ENCODE measurements at regions of chr5 and their contacts with region 1.

Region 1: DNA sequence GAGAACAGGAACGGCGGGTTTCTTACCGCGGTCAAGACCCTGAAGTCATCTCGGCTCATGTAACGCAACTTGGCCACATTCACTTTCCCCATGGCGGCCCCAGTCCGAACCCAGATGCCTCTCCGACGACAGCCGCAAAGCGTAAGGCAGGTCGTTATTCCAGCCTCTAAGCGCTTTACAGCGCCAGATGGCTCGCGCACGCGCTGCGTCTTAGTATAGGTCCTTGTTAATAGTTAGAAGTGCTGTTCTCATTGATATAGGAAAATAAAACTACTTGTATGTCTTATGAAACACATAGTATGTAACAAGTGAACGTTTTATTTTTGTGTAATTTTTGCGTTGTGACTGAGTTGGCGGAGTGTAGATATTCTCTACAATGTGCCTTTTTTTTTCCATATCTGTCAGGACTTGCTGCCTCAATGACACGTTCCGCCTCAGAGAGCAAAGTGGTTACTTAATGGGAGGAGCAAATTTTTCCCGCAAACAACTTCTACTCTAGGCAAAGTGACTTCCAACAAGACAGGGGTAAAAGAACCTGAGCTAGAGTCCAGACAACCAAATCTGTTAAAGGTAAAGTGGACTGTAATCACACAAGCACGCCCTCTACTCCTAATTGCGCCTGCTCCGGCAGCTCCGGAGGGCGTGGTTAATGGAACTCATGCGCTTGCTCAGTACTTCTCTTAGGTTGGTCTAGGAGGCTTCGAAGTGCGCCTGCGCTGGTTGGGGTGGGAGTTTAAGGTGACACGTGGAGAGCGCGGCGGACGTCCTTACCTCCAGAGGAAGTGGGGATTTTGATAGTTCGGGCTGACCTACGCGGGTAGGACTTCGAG is at the start of gene RIOK2:
- DNase-seq: peak; percentile 74 to 96
- H3K4me3 ChIP-seq: peak within 1 kb of the TSS; percentile 69 to 79
- H3K27ac ChIP-seq: peak within 1 kb of the TSS; percentile 73 to 93
- H3K4me1 ChIP-seq: peaks cover 0 to 14% of the 10 kb centered on the region in 2 donors
- H3K27me3 ChIP-seq: no peaks in the 10 kb centered on the region
- CTCF ChIP-seq: no peak
- total RNA-seq, gene RIOK2: 3.7 TPM

Region 2: GRCh38 chr5:97078958-97079743 is 104.2 kb before region 1 on chr5:
- intact Hi-C with region 1: no loop called
- DNase-seq: no peak
- H3K4me3 ChIP-seq: no peak overlapping the region
- H3K27ac ChIP-seq: no peak overlapping the region
- H3K4me1 ChIP-seq: no peaks in the 10 kb centered on the region
- H3K27me3 ChIP-seq: no peaks in the 10 kb centered on the region
- CTCF ChIP-seq: no peak

Region 3: GRCh38 chr5:98928873-98929696 is 1745.8 kb after region 1 on chr5 and contains the start of gene CHD1:
- intact Hi-C with region 1: loop called (anchors 5 kb)
- DNase-seq: peak; percentile 93 to 99
- H3K4me3 ChIP-seq: peak within 1 kb of the TSS; percentile 91 to 93
- H3K27ac ChIP-seq: peak within 1 kb of the TSS; percentile 100
- H3K4me1 ChIP-seq: peaks cover 0 to 20% of the 10 kb centered on the region in 2 donors
- H3K27me3 ChIP-seq: no peaks in the 10 kb centered on the region
- CTCF ChIP-seq: no peak
- total RNA-seq, gene CHD1: 35.5 TPM